GM12878 (cell line): ENCODE measurements at regions of chr10 and their contacts with region 1.

Region 1: GRCh38 chr10:50260791-50261281 is 9.5 kb upstream of the ASAH2 start:
- DNase-seq: peak; percentile 71
- ATAC-seq: peak; percentile 99
- H3K4me3 ChIP-seq: no peak overlapping the region
- H3K27ac ChIP-seq: no peak overlapping the region
- H3K4me1 ChIP-seq: peaks cover 13% of the 10 kb centered on the region
- H3K27me3 ChIP-seq: no peaks in the 10 kb centered on the region; a peak in 2 of 4 replicates
- CTCF ChIP-seq: no peak
- EP300 ChIP-seq: peak; percentile 31 to 59; a peak in 2 of 4 replicates
- POLR2A ChIP-seq: no peak
- RAD21 ChIP-seq: no peak

Region 2: DNA sequence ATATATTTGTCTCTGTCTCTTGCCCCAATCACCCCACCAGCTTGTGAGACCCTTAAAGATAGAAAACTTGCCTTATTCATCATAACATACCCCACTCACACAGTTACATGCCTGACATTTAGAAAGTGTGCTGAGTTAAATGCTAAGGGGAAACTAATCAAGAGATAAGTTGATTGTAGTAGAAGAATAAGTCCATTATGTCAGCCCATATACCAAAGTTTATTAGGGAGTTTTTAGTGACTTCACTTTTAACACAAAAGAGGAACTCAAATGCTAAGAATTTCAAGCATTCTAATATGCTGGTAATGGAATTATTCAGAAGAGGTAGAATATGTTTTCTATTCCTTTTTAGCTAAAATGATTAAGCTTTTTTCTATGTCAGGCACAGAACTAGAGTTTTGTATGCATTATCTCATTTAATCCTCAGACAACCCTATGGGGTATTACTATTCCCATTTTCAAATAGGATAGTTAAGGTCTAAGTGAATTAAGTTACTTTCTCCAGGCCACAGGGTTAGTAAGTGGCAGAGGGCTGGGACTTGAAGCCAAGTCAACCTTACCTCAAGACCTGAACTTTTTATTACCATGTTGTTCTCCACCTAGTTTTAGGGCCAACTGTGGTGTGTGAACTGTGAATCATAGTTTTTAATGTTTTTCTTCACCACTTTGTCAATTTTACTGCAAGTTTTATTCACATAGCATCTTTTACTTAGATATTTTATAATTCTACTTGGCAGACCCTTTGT is 29.1 kb before region 1 on chr10:
- CTCF ChIA-PET with region 1: interaction called, 5 read pairs
- POLR2A ChIA-PET with region 1: no interaction called
- RAD21 ChIA-PET with region 1: interaction called, 7 read pairs
- SMC1A ChIA-PET with region 1: interaction called, 28 read pairs
- in situ Hi-C with region 1: no loop called
- intact Hi-C with region 1: no loop called
- DNase-seq: no peak
- ATAC-seq: peak; percentile 78
- H3K4me3 ChIP-seq: no peak overlapping the region
- H3K27ac ChIP-seq: no peak overlapping the region
- H3K4me1 ChIP-seq: no peaks in the 10 kb centered on the region
- H3K27me3 ChIP-seq: peaks cover 0 to 2% of the 10 kb centered on the region in 2 experiments; a peak in 2 of 4 replicates
- CTCF ChIP-seq: no peak
- EP300 ChIP-seq: peak; percentile 43 to 63; a peak in 2 of 4 replicates
- POLR2A ChIP-seq: no peak
- RAD21 ChIP-seq: no peak

Region 3: DNA sequence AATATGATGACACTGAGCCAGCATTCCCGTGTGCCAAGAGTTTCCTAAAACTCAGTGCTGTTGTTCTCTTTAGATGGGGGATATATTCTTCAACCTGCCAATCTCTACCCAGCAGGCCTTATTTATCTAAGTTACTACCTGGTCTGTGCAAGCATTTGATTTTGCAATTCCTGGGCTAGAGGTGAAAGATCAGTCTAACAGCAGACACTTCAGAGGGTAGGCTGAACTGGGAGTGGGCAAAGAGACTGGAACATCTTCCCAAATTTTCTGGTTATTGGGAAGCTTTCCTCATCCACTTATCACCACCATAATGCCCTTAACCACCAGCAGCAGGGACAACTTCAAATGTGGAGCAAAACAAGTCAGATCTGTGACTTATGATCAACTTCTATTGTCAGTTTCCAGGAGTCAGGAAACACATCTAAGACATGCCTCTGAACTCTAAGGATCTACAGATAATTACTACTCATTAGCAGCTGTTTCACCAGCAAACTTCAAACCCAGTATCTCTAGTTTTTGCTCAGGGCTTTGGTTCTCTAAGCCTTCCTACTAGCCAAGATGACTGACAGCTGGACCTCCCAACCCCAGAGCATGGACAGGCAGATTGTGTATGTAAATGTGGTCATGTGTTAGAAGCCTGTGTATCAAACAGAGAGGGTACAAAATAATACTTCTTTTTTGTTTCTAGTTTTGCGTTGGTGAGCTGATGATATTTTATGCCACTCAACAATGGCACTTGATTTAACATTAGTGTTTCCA is 10.6 kb before region 1 on chr10:
- CTCF ChIA-PET with region 1: interaction called, 6 read pairs
- POLR2A ChIA-PET with region 1: interaction called, 4 read pairs
- RAD21 ChIA-PET with region 1: no interaction called
- SMC1A ChIA-PET with region 1: interaction called, 12 read pairs
- in situ Hi-C with region 1: no loop called
- intact Hi-C with region 1: no loop called
- DNase-seq: no peak
- ATAC-seq: no peak
- H3K4me3 ChIP-seq: no peak overlapping the region
- H3K27ac ChIP-seq: no peak overlapping the region
- H3K4me1 ChIP-seq: no peaks in the 10 kb centered on the region
- H3K27me3 ChIP-seq: peaks cover 0 to 6% of the 10 kb centered on the region in 2 experiments; a peak in 3 of 4 replicates
- CTCF ChIP-seq: no peak
- EP300 ChIP-seq: no peak
- POLR2A ChIP-seq: no peak
- RAD21 ChIP-seq: no peak

Region 4: GRCh38 chr10:50410066-50410811 is 149.4 kb after region 1 on chr10:
- CTCF ChIA-PET with region 1: no interaction called
- POLR2A ChIA-PET with region 1: no interaction called
- RAD21 ChIA-PET with region 1: no interaction called
- SMC1A ChIA-PET with region 1: no interaction called
- in situ Hi-C with region 1: no loop called
- intact Hi-C with region 1: no loop called
- DNase-seq: no peak
- ATAC-seq: peak; percentile 47
- H3K4me3 ChIP-seq: no peak overlapping the region
- H3K27ac ChIP-seq: no peak overlapping the region
- H3K4me1 ChIP-seq: no peaks in the 10 kb centered on the region
- H3K27me3 ChIP-seq: no peaks in the 10 kb centered on the region
- CTCF ChIP-seq: no peak
- EP300 ChIP-seq: no peak
- POLR2A ChIP-seq: no peak
- RAD21 ChIP-seq: no peak